Right cardiac atrium (tissue), 5 donors: ENCODE measurements at regions of chr17 and their contacts with region 1.

Region 1: GRCh38 chr17:66715745-66716156 is 119.2 kb upstream of the CACNG5 start:
- DNase-seq: no peak
- ATAC-seq: peak; percentile 46 to 53
- H3K4me3 ChIP-seq: no peak overlapping the region
- H3K27ac ChIP-seq: no peak overlapping the region
- H3K4me1 ChIP-seq: no peaks in the 10 kb centered on the region
- H3K27me3 ChIP-seq: no peaks in the 10 kb centered on the region

Region 2: DNA sequence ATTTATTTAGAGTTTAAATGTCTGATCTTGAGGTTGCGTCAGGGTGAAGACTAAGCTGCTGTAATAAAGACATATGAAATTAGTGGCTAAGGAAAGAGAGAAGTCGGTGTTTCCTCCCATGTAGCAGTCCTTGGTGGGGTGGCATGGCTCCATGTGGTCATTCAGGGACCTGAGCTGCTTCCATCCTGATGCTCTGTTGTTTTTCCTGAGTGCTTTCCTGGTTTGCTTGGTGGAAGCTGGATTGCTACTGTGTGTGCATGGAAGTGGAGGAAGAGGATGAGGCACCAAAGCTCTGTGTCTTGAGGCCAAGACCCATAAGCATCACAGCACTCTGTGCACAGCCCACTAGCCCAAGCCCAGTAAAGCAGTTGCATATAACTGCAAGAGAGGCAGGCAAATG is 122.6 kb before region 1 on chr17:
- intact Hi-C with region 1: no loop called
- DNase-seq: no peak
- ATAC-seq: no peak
- H3K4me3 ChIP-seq: no peak overlapping the region
- H3K27ac ChIP-seq: no peak overlapping the region
- H3K4me1 ChIP-seq: no peaks in the 10 kb centered on the region
- H3K27me3 ChIP-seq: no peaks in the 10 kb centered on the region

Region 3: GRCh38 chr17:66791347-66791746 is 75.6 kb after region 1 on chr17:
- intact Hi-C with region 1: no loop called
- DNase-seq: peak; percentile 23 to 65 (median 57)
- ATAC-seq: peak; percentile 60 to 77
- H3K4me3 ChIP-seq: no peak overlapping the region
- H3K27ac ChIP-seq: peak overlapping the region; percentile 15
- H3K4me1 ChIP-seq: peaks cover 3% of the 10 kb centered on the region
- H3K27me3 ChIP-seq: no peaks in the 10 kb centered on the region

Region 4: DNA sequence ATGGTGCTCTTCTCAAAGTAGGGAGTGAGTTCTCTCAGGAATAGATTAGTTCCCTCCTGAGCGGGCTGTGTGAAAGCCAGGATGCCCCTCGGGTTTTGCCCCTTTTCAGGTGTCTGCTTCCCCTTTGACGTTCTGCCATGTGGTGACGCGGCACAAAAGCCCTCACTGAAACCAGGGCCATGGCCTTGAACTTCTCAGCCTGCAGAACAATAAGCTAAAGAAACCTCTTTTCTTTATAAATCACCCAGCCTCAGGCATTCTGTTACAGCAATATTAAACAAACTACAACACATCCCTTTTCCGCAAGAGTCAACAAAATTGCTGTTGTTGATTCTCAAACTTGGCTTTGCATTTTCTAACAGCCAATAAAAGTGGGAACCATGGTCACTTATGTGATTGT is 103.7 kb after region 1 on chr17:
- intact Hi-C with region 1: no loop called
- DNase-seq: no peak
- ATAC-seq: no peak
- H3K4me3 ChIP-seq: no peak overlapping the region
- H3K27ac ChIP-seq: no peak overlapping the region
- H3K4me1 ChIP-seq: no peaks in the 10 kb centered on the region
- H3K27me3 ChIP-seq: no peaks in the 10 kb centered on the region

Region 5: GRCh38 chr17:66906321-66907278 is 190.8 kb after region 1 on chr17:
- intact Hi-C with region 1: loop called in 2 of 4 experiments (anchors 5 kb)
- DNase-seq: peak; percentile 83 to 94 (median 88)
- ATAC-seq: no peak
- H3K4me3 ChIP-seq: no peak overlapping the region
- H3K27ac ChIP-seq: no peak overlapping the region
- H3K4me1 ChIP-seq: no peaks in the 10 kb centered on the region
- H3K27me3 ChIP-seq: no peaks in the 10 kb centered on the region

Region 6: DNA sequence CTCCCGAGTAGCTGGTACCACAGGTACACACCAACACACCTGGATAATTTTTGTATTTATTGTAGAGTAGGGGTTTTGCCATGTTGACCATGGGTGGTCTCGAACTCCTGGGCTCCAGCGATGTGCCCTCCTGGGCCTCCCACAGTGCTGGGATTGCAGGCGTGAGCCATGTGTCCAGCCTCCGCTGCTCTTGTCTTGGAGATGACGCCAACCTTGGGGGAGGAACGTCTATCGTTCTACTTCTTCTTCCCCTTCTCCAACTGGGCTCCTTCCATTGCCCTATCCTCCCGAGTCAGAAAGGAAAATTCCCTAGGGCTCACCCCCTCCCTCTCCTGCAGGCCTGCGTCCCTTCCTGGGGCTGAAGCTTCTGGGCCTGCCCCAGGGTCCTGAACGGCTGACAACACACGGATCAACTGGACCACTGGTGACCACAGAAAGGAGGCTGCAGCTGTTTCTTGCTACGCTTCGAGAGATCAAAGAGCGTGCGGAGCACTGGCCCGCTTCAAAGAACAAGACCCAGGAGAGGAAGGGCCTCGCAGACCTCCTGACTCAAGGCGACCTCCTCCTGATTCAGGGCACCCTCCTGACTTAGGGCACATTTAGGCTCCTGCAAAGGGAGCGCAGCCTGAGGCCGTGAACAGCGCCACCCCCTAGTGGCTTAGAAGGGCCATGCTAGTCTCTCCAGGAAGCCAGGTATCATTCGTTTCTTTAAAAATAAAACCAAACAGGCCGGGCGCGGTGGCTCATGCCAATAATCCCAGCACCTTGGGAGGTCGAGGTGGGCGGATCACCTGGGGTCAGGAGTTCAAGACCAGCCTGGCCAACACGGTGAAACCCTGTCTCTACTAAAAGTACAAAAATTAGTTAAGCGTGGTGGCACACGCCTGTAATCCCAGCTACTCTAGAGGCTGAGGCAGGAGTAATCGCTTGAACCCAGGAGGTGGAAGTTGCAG is 577.8 kb after region 1 on chr17:
- intact Hi-C with region 1: loop called in 1 of 4 experiments (anchors 10 kb)
- DNase-seq: peak; percentile 60 to 86 (median 82)
- ATAC-seq: peak; percentile 46 to 66
- H3K4me3 ChIP-seq: no peak overlapping the region
- H3K27ac ChIP-seq: no peak overlapping the region
- H3K4me1 ChIP-seq: no peaks in the 10 kb centered on the region
- H3K27me3 ChIP-seq: no peaks in the 10 kb centered on the region